ENCODE measurements at regions of chr11 and their contacts with region 1.

Region 1: GRCh38 chr11:13210424-13210823 is 67.2 kb upstream of the BMAL1 start:
- DNase-seq: peak; percentile 57
- ATAC-seq: peak; percentile 37
- H3K4me3 Mint-ChIP-seq: no peak overlapping the region
- H3K27ac Mint-ChIP-seq: no peak overlapping the region
- H3K4me1 Mint-ChIP-seq: peaks cover 33% of the 10 kb centered on the region
- H3K27me3 Mint-ChIP-seq: no peaks in the 10 kb centered on the region

Region 2: GRCh38 chr11:13105237-13105844 is 105.1 kb before region 1 on chr11:
- CTCF ChIA-PET with region 1: no interaction called
- DNase-seq: no peak
- ATAC-seq: no peak
- H3K4me3 Mint-ChIP-seq: no peak overlapping the region
- H3K27ac Mint-ChIP-seq: no peak overlapping the region
- H3K4me1 Mint-ChIP-seq: no peaks in the 10 kb centered on the region
- H3K27me3 Mint-ChIP-seq: peaks cover 31% of the 10 kb centered on the region

Region 3: DNA sequence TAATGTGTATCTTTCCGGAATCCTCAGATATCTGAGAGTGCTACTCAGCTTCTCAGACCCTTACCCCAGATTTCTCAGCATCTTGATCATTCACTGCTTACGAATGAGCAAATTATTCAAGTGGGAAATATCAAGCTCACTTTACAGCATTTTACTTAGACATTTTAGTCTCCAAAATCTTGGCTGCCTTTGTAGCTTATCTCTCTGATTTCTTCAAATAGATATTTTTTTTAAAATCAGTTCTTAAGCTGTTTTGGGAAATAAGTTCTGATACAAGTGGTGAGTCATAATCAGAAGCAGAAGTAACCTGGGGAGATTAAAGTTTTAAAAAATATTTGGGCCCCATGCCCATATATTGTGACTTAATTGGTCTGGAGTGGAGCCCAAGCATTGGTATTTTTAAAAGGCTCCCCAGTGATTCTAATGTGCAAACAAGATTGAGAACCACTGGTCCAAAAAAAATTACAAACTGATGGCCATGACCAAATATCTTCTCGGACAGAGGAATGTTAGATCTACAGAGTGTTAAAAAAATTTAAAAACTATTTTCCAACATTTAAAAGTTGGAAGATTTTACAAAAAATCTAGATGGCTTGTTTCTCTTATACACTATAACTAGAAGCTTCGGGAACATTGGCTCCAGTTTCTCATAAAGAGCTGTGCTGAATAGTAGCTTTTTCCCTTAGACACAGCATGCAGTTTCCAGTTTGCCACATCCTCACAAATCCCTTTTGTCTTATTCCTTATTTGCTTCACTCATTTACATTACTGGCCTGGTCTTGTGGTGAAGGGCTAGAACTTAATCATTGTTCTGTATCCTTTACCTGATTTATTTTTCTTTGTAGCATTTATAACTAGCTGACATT is 20.6 kb before region 1 on chr11:
- CTCF ChIA-PET with region 1: no interaction called
- DNase-seq: no peak
- ATAC-seq: no peak
- H3K4me3 Mint-ChIP-seq: no peak overlapping the region
- H3K27ac Mint-ChIP-seq: no peak overlapping the region
- H3K4me1 Mint-ChIP-seq: no peaks in the 10 kb centered on the region
- H3K27me3 Mint-ChIP-seq: peaks cover 37% of the 10 kb centered on the region

Region 4: GRCh38 chr11:13343931-13344717 is 133.7 kb after region 1 on chr11:
- CTCF ChIA-PET with region 1: interaction called, 16 read pairs
- DNase-seq: peak; percentile 84
- ATAC-seq: peak; percentile 53
- H3K4me3 Mint-ChIP-seq: no peak overlapping the region
- H3K27ac Mint-ChIP-seq: peak overlapping the region; percentile 8
- H3K4me1 Mint-ChIP-seq: peaks cover 48% of the 10 kb centered on the region
- H3K27me3 Mint-ChIP-seq: no peaks in the 10 kb centered on the region

Region 5: GRCh38 chr11:13384908-13385640 is 174.7 kb after region 1 on chr11:
- CTCF ChIA-PET with region 1: interaction called, 16 read pairs
- DNase-seq: peak; percentile 47
- ATAC-seq: no peak
- H3K4me3 Mint-ChIP-seq: no peak overlapping the region
- H3K27ac Mint-ChIP-seq: peak overlapping the region; percentile 47
- H3K4me1 Mint-ChIP-seq: no peaks in the 10 kb centered on the region
- H3K27me3 Mint-ChIP-seq: no peaks in the 10 kb centered on the region